HEK293 (cell line): ENCODE measurements at regions of chr19 and their contacts with region 1.

Region 1: DNA sequence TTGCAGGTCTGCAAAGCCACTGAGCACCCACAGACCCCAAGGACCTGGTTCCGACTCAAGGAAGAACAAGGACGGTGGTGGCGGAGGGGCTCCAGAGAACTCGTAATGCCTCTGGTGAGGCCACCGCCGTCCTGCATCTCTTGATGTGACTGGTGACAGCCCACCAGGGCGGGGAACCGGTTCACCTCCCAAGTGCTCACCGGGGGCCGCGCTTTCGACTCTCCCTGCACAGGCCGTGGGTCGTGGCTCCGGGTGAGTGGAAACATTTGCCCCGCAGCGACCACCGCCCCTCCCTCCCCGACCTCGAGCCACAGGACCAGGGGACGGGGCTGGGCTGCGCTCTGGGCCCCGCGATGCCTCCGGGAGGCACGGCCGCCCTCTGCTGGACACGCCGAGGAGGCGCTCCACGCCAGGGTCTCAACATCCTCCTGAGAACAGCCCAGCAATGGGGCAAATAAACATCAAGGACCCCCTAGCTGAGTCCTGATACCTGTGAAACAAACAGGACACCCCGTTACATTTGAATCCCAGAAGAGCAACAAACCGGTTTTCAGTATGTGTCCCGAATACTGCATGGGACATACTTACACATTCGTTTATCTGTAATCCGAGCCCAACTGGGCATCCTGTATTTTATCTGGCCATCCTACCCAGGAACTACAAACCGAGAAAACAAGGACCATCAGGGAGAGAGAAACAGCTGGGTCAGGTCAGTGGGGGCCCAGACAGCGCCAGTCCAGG is 3.9 kb upstream of the PLPP2 start:
- H3K4me3 ChIP-seq: no peak overlapping the region
- H3K27ac ChIP-seq: no peak overlapping the region
- H3K4me1 ChIP-seq: no peaks in the 10 kb centered on the region; the same call in 1 of the 2 replicates
- CTCF ChIP-seq: peak; percentile 41

Region 2: GRCh38 chr19:262125-262524 is 33.0 kb before region 1 on chr19:
- CTCF ChIA-PET with region 1: interaction called, 10 read pairs
- POLR2A ChIA-PET with region 1: no interaction called
- H3K4me3 ChIP-seq: no peak overlapping the region
- H3K27ac ChIP-seq: no peak overlapping the region
- H3K4me1 ChIP-seq: no peaks in the 10 kb centered on the region
- CTCF ChIP-seq: no peak

Region 3: GRCh38 chr19:313169-313987 is 18.3 kb after region 1 on chr19:
- CTCF ChIA-PET with region 1: interaction called, 11 read pairs
- POLR2A ChIA-PET with region 1: no interaction called
- H3K4me3 ChIP-seq: no peak overlapping the region
- H3K27ac ChIP-seq: no peak overlapping the region
- H3K4me1 ChIP-seq: no peaks in the 10 kb centered on the region
- CTCF ChIP-seq: no peak